ENCODE measurements at regions of chr5 and their contacts with region 1.

Region 1: DNA sequence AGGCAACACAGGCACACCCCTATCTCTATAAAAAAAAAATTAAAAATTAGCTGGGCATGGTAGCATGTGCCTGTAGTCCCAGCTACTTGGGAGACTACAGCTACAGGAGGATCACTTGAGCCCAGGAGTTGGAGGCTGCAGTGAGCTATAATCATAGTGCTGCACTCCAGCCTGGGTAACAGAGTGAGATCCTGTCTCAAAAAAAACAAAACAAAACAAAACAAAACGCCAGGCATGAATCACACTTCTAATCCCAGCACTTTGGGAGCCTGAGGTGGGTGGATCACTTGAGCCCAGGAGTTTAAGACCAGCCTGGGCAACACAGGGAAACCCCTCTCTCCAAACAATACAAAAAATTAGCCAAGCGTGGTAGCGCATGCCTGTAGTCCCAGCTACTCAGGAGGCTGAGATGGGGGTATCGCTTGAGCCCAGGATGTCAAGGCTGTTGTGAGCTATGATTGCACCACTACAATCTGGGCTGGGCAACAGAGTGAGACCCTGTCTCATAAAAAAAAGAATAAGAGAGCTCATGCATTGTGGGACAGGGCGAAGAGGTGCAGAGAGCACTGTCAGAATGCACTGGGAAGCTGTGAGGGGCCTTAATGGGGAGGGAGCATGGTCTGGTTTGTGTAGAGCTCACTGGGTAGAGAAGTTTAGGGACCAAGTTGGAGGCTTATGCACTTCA is 8.4 kb upstream of the SAP30L start:
- DNase-seq: no peak
- ATAC-seq: no peak
- H3K4me3 ChIP-seq: no peak overlapping the region
- H3K27ac ChIP-seq: no peak overlapping the region
- H3K4me1 ChIP-seq: no peaks in the 10 kb centered on the region
- CTCF ChIP-seq: no peak
- EP300 ChIP-seq: no peak
- POLR2A ChIP-seq: no peak
- RAD21 ChIP-seq: no peak

Region 2: DNA sequence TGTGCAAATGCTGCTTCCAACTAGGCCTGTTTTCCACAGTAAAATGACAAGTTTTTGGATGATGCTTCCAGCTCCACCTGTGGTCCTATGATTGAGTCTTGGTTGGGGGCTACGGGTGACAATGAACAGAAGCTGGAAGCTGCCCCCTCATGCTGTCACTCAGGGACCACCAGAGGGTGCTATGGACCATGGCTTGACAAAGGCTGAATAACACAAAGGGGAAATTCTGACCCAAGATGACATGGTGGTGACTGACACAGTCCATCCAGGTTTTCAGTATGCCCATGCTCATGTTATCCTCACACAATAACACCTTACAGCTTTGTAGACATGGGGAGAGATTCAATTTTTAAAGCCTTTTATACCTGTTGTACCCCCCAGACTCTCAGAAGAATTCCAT is 15.6 kb before region 1 on chr5:
- CTCF ChIA-PET with region 1: interaction called, 10 read pairs
- POLR2A ChIA-PET with region 1: no interaction called
- DNase-seq: peak in 1 of 2 experiments; percentile 37
- ATAC-seq: peak; percentile 66 to 80; a peak in 5 of 6 replicates
- H3K4me3 ChIP-seq: no peak overlapping the region
- H3K27ac ChIP-seq: no peak overlapping the region
- H3K4me1 ChIP-seq: no peaks in the 10 kb centered on the region
- CTCF ChIP-seq: peak; percentile 51
- EP300 ChIP-seq: no peak
- POLR2A ChIP-seq: no peak
- RAD21 ChIP-seq: peak; percentile 48 to 54

Region 3: DNA sequence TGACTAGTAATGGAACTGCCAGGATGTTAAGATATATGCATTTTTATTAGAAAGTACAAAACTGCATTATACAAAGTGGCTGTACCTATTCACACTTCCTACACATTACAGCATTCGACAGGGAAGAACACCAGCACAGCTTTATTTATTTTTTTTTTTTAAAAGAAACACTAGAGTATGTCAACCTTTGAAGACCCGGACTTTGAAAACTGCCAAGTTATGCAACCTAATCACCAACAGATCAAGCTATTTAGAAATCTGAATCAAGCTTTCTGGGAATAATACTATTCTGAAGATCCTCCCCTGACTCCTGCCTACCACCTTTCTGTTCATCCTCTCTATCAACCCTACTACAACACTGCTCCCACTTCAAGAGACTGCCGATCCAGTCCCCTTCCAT is 496.1 kb after region 1 on chr5:
- CTCF ChIA-PET with region 1: no interaction called
- POLR2A ChIA-PET with region 1: no interaction called
- DNase-seq: no peak
- ATAC-seq: no peak
- H3K4me3 ChIP-seq: no peak overlapping the region
- H3K27ac ChIP-seq: no peak overlapping the region
- H3K4me1 ChIP-seq: peaks cover 7% of the 10 kb centered on the region; the same call in 1 of the 3 replicates
- CTCF ChIP-seq: no peak
- EP300 ChIP-seq: no peak
- POLR2A ChIP-seq: no peak
- RAD21 ChIP-seq: no peak